ENCODE measurements at regions of chr9 and their contacts with region 1.

Region 1: GRCh38 chr9:5466766-5467165 is 16.4 kb downstream of the CD274 start:
- DNase-seq: no peak
- H3K4me3 ChIP-seq: no peak overlapping the region
- H3K27ac ChIP-seq: no peak overlapping the region
- H3K4me1 ChIP-seq: no peaks in the 10 kb centered on the region
- H3K27me3 ChIP-seq: no peaks in the 10 kb centered on the region
- CTCF ChIP-seq: no peak
- POLR2A ChIP-seq: no peak

Region 2: GRCh38 chr9:5425006-5425628 is 41.6 kb before region 1 on chr9:
- CTCF ChIA-PET with region 1: no interaction called
- POLR2A ChIA-PET with region 1: no interaction called
- dilution Hi-C with region 1: no loop called
- intact Hi-C with region 1: loop called (anchors 1 kb)
- DNase-seq: peak; percentile 42
- H3K4me3 ChIP-seq: no peak overlapping the region
- H3K27ac ChIP-seq: no peak overlapping the region
- H3K4me1 ChIP-seq: no peaks in the 10 kb centered on the region
- H3K27me3 ChIP-seq: no peaks in the 10 kb centered on the region
- CTCF ChIP-seq: peak; percentile 20 to 32
- POLR2A ChIP-seq: no peak

Region 3: GRCh38 chr9:5518171-5518936 is 51.6 kb after region 1 on chr9:
- CTCF ChIA-PET with region 1: no interaction called
- POLR2A ChIA-PET with region 1: no interaction called
- dilution Hi-C with region 1: no loop called
- intact Hi-C with region 1: no loop called
- DNase-seq: no peak
- H3K4me3 ChIP-seq: no peak overlapping the region
- H3K27ac ChIP-seq: no peak overlapping the region
- H3K4me1 ChIP-seq: no peaks in the 10 kb centered on the region
- H3K27me3 ChIP-seq: no peaks in the 10 kb centered on the region
- CTCF ChIP-seq: no peak
- POLR2A ChIP-seq: no peak